Heart left ventricle (tissue), 16 donors: ENCODE measurements at regions of chr20 and their contacts with region 1.

Region 1: DNA sequence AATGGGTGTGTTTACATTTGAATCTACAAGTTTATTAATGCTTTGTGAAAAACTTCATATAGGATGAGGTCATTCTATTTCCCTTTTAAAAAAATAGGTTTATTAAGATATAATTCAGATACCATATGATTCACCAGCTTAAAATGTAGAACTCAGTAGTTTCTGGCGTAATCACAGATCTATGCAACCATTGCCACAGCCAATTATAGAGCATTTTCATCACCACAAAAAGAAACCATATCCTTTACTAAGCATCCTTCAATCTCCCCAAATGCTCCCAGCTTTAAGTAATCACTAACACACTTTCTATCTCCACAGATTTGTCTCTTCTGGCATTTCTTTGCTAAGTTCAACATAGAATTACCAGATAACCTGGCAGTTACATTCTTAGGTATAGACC is 137.2 kb downstream of the PTPRT start:
- DNase-seq: no peak
- ATAC-seq: no peak
- H3K4me3 ChIP-seq: no peak overlapping the region
- H3K27ac ChIP-seq: no peak overlapping the region
- H3K4me1 ChIP-seq: no peaks in the 10 kb centered on the region
- H3K27me3 ChIP-seq: no peaks in the 10 kb centered on the region
- CTCF ChIP-seq: no peak
- POLR2A ChIP-seq: no peak

Region 2: GRCh38 chr20:43011491-43011890 is 41.0 kb before region 1 on chr20:
- intact Hi-C with region 1: loop called in 1 of 10 experiments (anchors 2 kb)
- DNase-seq: no peak
- ATAC-seq: no peak
- H3K4me3 ChIP-seq: no peak overlapping the region
- H3K27ac ChIP-seq: no peak overlapping the region
- H3K4me1 ChIP-seq: no peaks in the 10 kb centered on the region
- H3K27me3 ChIP-seq: no peaks in the 10 kb centered on the region
- CTCF ChIP-seq: no peak
- POLR2A ChIP-seq: no peak